ENCODE measurements at regions of chr15 and their contacts with region 1.

Region 1: DNA sequence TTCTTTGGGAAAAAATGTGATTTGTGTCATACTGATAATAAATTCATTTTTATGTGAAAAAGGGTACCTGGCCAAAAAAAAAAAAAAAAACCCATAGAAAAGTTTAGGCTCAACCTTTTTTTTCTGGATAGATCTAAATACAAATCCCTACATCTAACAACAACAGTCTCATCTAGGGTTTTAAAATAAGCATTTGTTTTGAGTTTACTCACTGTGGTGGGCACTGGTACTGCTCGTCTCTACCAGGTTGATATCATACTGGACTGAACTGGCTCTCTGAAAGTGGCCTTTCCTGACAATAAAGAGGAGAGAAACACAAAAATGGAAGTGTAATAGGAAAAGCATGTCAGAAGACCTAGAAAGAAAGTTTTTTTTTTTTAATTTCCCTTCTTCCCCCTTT is 52.0 kb downstream of the FBXO22 start:
- DNase-seq: no peak
- ATAC-seq: no peak
- H3K4me3 ChIP-seq: no peak overlapping the region
- H3K4me3 Mint-ChIP-seq: no peak overlapping the region
- H3K27ac ChIP-seq: no peak overlapping the region
- H3K27ac Mint-ChIP-seq: no peak overlapping the region
- H3K4me1 ChIP-seq: no peaks in the 10 kb centered on the region
- H3K4me1 Mint-ChIP-seq: peaks cover 0 to 5% of the 10 kb centered on the region in 2 donors
- H3K27me3 ChIP-seq: peaks cover 2% of the 10 kb centered on the region
- H3K27me3 Mint-ChIP-seq: peaks cover 27 to 56% of the 10 kb centered on the region in 2 donors
- CTCF ChIP-seq: no peak

Region 2: DNA sequence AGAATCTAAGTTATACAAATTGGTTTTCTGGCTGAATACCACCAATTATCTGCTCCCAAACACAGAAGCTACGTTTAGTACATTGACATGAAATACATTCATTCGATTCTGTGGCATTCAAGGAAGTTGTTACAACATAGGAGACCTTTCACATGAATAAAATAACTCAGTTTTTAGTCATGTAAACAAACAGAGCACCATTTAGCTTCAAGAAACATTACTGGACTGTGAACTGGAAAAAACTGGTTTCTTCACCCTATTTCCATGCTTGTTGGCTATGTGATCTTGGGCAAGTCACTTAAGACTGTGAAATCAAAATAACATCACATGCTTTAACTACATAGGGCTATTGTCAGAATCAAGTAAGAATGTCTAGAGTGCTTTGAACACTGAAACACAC is 10.4 kb after region 1 on chr15:
- intact Hi-C with region 1: loop called (anchors 1 kb)
- DNase-seq: no peak
- ATAC-seq: no peak
- H3K4me3 ChIP-seq: no peak overlapping the region
- H3K4me3 Mint-ChIP-seq: no peak overlapping the region
- H3K27ac ChIP-seq: no peak overlapping the region
- H3K27ac Mint-ChIP-seq: no peak overlapping the region
- H3K4me1 ChIP-seq: no peaks in the 10 kb centered on the region
- H3K4me1 Mint-ChIP-seq: no peaks in the 10 kb centered on the region
- H3K27me3 ChIP-seq: no peaks in the 10 kb centered on the region
- H3K27me3 Mint-ChIP-seq: peaks cover 3 to 6% of the 10 kb centered on the region in 2 donors
- CTCF ChIP-seq: no peak

Measured in natural killer cell (primary cell).